CD8-positive, alpha-beta T cell (primary cell): ENCODE measurements at regions of chr10 and their contacts with region 1.

Region 1: DNA sequence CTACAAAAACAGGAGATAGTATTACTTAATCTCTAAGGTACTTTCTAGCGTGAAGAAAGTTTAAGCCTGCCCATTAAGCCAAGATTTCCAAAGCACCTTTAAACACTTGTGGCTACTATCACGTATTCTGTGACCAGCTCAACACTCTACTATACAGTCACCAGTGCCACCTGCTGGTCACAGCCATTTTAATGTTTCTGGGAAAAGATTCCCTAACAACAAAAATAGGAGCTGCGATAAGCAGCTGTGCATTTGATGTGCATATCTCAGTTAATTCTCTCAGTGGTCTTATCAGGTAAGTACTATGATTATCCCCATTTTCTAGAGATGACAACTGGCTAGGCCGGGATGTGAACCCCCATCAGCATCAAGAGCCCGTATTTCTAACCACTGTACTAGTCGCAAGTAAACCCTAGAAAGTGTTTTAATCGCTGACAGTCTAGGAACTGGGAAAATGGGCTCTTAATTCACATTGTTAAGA is 860 bp downstream of the SEC31B start:
- DNase-seq: peak; percentile 25 to 75 (median 67)
- ATAC-seq: peak; percentile 86
- H3K4me3 ChIP-seq: no peak overlapping the region
- H3K4me3 Mint-ChIP-seq: no peak overlapping the region
- H3K27ac ChIP-seq: no peak overlapping the region
- H3K27ac Mint-ChIP-seq: no peak overlapping the region
- H3K4me1 ChIP-seq: peaks cover 11% of the 10 kb centered on the region
- H3K4me1 Mint-ChIP-seq: peaks cover 21% of the 10 kb centered on the region
- H3K27me3 ChIP-seq: no peaks in the 10 kb centered on the region
- H3K27me3 Mint-ChIP-seq: no peaks in the 10 kb centered on the region
- CTCF ChIP-seq: peak; percentile 90

Region 2: GRCh38 chr10:100346765-100347567 is 171.8 kb before region 1 on chr10 and contains the start of gene SCD:
- CTCF ChIA-PET with region 1: interaction called, 113 read pairs
- POLR2A ChIA-PET with region 1: no interaction called
- intact Hi-C with region 1: no loop called
- DNase-seq: peak; percentile 46 to 91 (median 72)
- ATAC-seq: peak; percentile 86
- H3K4me3 ChIP-seq: peak within 1 kb of the TSS; percentile 63 to 79
- H3K4me3 Mint-ChIP-seq: peak within 1 kb of the TSS; percentile 93
- H3K27ac ChIP-seq: peak within 1 kb of the TSS in 1 of 2 experiments; percentile 36
- H3K27ac Mint-ChIP-seq: peak within 1 kb of the TSS; percentile 60
- H3K4me1 ChIP-seq: peaks cover 6% of the 10 kb centered on the region
- H3K4me1 Mint-ChIP-seq: peaks cover 31% of the 10 kb centered on the region
- H3K27me3 ChIP-seq: no peaks in the 10 kb centered on the region
- H3K27me3 Mint-ChIP-seq: no peaks in the 10 kb centered on the region
- CTCF ChIP-seq: no peak
- total RNA-seq, gene SCD: 5.4 TPM

Region 3: GRCh38 chr10:100481462-100482081 is 37.2 kb before region 1 on chr10:
- CTCF ChIA-PET with region 1: interaction called, 238 read pairs
- POLR2A ChIA-PET with region 1: interaction called, 9 read pairs
- intact Hi-C with region 1: loop called (anchors 1 kb)
- DNase-seq: peak; percentile 85 to 98 (median 90)
- ATAC-seq: peak; percentile 97
- H3K4me3 ChIP-seq: peak overlapping the region; percentile 61 to 74
- H3K4me3 Mint-ChIP-seq: peak overlapping the region; percentile 87
- H3K27ac ChIP-seq: peak overlapping the region in 1 of 2 experiments; percentile 21
- H3K27ac Mint-ChIP-seq: no peak overlapping the region
- H3K4me1 ChIP-seq: peaks cover 10% of the 10 kb centered on the region
- H3K4me1 Mint-ChIP-seq: peaks cover 19% of the 10 kb centered on the region
- H3K27me3 ChIP-seq: no peaks in the 10 kb centered on the region
- H3K27me3 Mint-ChIP-seq: peaks cover 22% of the 10 kb centered on the region
- CTCF ChIP-seq: no peak

Region 4: GRCh38 chr10:100501423-100501822 is 17.4 kb before region 1 on chr10:
- CTCF ChIA-PET with region 1: interaction called, 133 read pairs
- POLR2A ChIA-PET with region 1: no interaction called
- intact Hi-C with region 1: no loop called
- DNase-seq: no peak
- ATAC-seq: no peak
- H3K4me3 ChIP-seq: no peak overlapping the region
- H3K4me3 Mint-ChIP-seq: no peak overlapping the region
- H3K27ac ChIP-seq: no peak overlapping the region
- H3K27ac Mint-ChIP-seq: no peak overlapping the region
- H3K4me1 ChIP-seq: peaks cover under 1% of the 10 kb centered on the region
- H3K4me1 Mint-ChIP-seq: peaks cover 13% of the 10 kb centered on the region
- H3K27me3 ChIP-seq: no peaks in the 10 kb centered on the region
- H3K27me3 Mint-ChIP-seq: no peaks in the 10 kb centered on the region
- CTCF ChIP-seq: no peak

Region 5: GRCh38 chr10:100535715-100536353 is 17.0 kb after region 1 on chr10 and contains the start of gene HIF1AN:
- CTCF ChIA-PET with region 1: interaction called, 16 read pairs
- POLR2A ChIA-PET with region 1: interaction called, 10 read pairs
- intact Hi-C with region 1: no loop called
- DNase-seq: peak; percentile 73 to 97 (median 88)
- ATAC-seq: peak; percentile 99
- H3K4me3 ChIP-seq: peak within 1 kb of the TSS; percentile 59 to 82
- H3K4me3 Mint-ChIP-seq: no peak within 1 kb of the TSS
- H3K27ac ChIP-seq: peak within 1 kb of the TSS; percentile 55 to 75
- H3K27ac Mint-ChIP-seq: no peak within 1 kb of the TSS
- H3K4me1 ChIP-seq: peaks cover 29% of the 10 kb centered on the region
- H3K4me1 Mint-ChIP-seq: peaks cover 19% of the 10 kb centered on the region
- H3K27me3 ChIP-seq: no peaks in the 10 kb centered on the region
- H3K27me3 Mint-ChIP-seq: no peaks in the 10 kb centered on the region
- CTCF ChIP-seq: peak; percentile 92
- total RNA-seq, gene HIF1AN: 28.0 to 31.2 TPM